A549 (cell line): ENCODE measurements at regions of chr11 and their contacts with region 1.

Region 1: GRCh38 chr11:61332797-61333549 is at the starts of genes DDB1 and TKFC:
- DNase-seq: peak; percentile 91 to 94
- ATAC-seq: peak; percentile 91 to 96
- H3K4me3 ChIP-seq: peak within 1 kb of the TSS; percentile 96
- H3K27ac ChIP-seq: peak within 1 kb of the TSS; percentile 93 to 96
- H3K4me1 ChIP-seq: peaks cover 35% of the 10 kb centered on the region
- CTCF ChIP-seq: no peak
- EP300 ChIP-seq: no peak
- POLR2A ChIP-seq: peak; percentile 88
- RAD21 ChIP-seq: no peak
- polyA plus RNA-seq, gene DDB1: 213 and 222 TPM in 2 replicates
- polyA plus RNA-seq, gene TKFC: 46.5 and 51.2 TPM in 2 replicates

Region 2: DNA sequence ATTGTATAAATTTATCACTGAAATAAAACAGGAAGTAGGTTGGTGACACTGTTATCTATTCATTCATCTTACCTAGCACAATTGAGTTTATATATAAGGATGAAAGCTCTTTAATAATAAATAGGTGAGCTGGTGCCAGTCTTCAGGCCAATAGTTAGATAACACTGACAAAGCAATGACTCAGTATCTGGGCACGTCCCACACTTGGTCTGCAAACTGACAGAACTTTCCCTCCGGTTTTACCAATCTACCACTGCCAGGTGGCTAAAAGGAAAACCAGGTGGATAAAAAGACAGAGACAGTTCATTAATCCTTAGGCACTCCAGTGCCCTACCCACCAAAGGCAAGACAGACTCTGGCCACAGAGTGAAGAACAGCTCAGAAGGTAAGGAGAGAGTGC is 17.7 kb before region 1 on chr11:
- CTCF ChIA-PET with region 1: interaction called, 13 read pairs
- POLR2A ChIA-PET with region 1: no interaction called
- DNase-seq: no peak
- ATAC-seq: no peak
- H3K4me3 ChIP-seq: no peak overlapping the region
- H3K27ac ChIP-seq: no peak overlapping the region
- H3K4me1 ChIP-seq: no peaks in the 10 kb centered on the region
- CTCF ChIP-seq: no peak
- EP300 ChIP-seq: no peak
- POLR2A ChIP-seq: no peak
- RAD21 ChIP-seq: no peak

Region 3: GRCh38 chr11:61361686-61362541 is 28.9 kb after region 1 on chr11 and contains the starts of genes CYB561A3 and TMEM138:
- CTCF ChIA-PET with region 1: interaction called, 368 read pairs
- POLR2A ChIA-PET with region 1: interaction called, 67 read pairs
- DNase-seq: peak; percentile 95 to 96
- ATAC-seq: peak; percentile 98
- H3K4me3 ChIP-seq: peak within 1 kb of the TSS; percentile 82
- H3K27ac ChIP-seq: peak within 1 kb of the TSS; percentile 96 to 97
- H3K4me1 ChIP-seq: peaks cover 15% of the 10 kb centered on the region; the same call in 2 of the 3 replicates
- CTCF ChIP-seq: no peak
- EP300 ChIP-seq: no peak
- POLR2A ChIP-seq: peak; percentile 94
- RAD21 ChIP-seq: no peak
- polyA plus RNA-seq, gene CYB561A3: 50.8 and 58.1 TPM in 2 replicates
- polyA plus RNA-seq, gene TMEM138: 143 and 156 TPM in 2 replicates

Region 4: GRCh38 chr11:61392981-61393595 is 60.1 kb after region 1 on chr11:
- CTCF ChIA-PET with region 1: interaction called, 87 read pairs
- POLR2A ChIA-PET with region 1: interaction called, 12 read pairs
- DNase-seq: peak; percentile 28 to 35
- ATAC-seq: peak; percentile 51 to 64; a peak in 5 of 6 replicates
- H3K4me3 ChIP-seq: peak overlapping the region; percentile 69
- H3K27ac ChIP-seq: peak overlapping the region; percentile 82 to 90
- H3K4me1 ChIP-seq: 0 out of 3 replicates have a peak, but pooled peaks cover 8% of the 10 kb centered on the region
- CTCF ChIP-seq: peak; percentile 32
- EP300 ChIP-seq: no peak
- POLR2A ChIP-seq: no peak
- RAD21 ChIP-seq: peak; percentile 41 to 49; a peak in 4 of 5 replicates

Region 5: GRCh38 chr11:61429691-61430582 is 97.0 kb after region 1 on chr11 and contains the starts of genes CPSF7 and SDHAF2:
- CTCF ChIA-PET with region 1: interaction called, 17 read pairs
- POLR2A ChIA-PET with region 1: no interaction called
- DNase-seq: peak; percentile 94 to 97
- ATAC-seq: peak; percentile 96 to 97
- H3K4me3 ChIP-seq: peak within 1 kb of the TSS; percentile 82
- H3K27ac ChIP-seq: peak within 1 kb of the TSS; percentile 91 to 98
- H3K4me1 ChIP-seq: peaks cover 27% of the 10 kb centered on the region
- CTCF ChIP-seq: no peak
- EP300 ChIP-seq: no peak
- POLR2A ChIP-seq: peak; percentile 55
- RAD21 ChIP-seq: no peak
- polyA plus RNA-seq, gene CPSF7: 56.7 and 72.9 TPM in 2 replicates
- polyA plus RNA-seq, gene SDHAF2: 76.4 and 106 TPM in 2 replicates